HEK293T (cell line): ENCODE measurements at regions of chr20 and their contacts with region 1.

Region 1: GRCh38 chr20:23357767-23358591 is 4.0 kb upstream of the GZF1 start:
- DNase-seq: peak; percentile 85

Region 2: DNA sequence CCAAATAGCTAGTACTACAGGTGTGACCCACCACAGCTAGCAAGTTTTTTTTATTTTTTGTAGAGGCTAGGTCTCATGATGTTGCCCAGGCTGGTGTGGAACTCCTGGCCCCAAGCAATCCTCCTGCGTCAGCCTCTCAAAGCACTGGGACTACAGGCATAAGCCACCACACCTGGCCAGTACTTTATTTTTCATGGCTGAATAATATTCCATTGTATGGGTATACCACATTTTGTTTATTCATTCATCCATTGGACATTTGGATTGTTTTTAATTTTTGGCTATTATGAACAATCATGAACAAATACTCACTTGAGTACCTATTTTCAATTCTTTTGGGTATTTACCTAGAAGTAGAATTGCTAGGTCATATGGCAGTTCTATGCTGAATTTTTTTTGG is 14.4 kb before region 1 on chr20:
- CTCF ChIA-PET with region 1: no interaction called
- POLR2A ChIA-PET with region 1: no interaction called
- DNase-seq: no peak

Region 3: DNA sequence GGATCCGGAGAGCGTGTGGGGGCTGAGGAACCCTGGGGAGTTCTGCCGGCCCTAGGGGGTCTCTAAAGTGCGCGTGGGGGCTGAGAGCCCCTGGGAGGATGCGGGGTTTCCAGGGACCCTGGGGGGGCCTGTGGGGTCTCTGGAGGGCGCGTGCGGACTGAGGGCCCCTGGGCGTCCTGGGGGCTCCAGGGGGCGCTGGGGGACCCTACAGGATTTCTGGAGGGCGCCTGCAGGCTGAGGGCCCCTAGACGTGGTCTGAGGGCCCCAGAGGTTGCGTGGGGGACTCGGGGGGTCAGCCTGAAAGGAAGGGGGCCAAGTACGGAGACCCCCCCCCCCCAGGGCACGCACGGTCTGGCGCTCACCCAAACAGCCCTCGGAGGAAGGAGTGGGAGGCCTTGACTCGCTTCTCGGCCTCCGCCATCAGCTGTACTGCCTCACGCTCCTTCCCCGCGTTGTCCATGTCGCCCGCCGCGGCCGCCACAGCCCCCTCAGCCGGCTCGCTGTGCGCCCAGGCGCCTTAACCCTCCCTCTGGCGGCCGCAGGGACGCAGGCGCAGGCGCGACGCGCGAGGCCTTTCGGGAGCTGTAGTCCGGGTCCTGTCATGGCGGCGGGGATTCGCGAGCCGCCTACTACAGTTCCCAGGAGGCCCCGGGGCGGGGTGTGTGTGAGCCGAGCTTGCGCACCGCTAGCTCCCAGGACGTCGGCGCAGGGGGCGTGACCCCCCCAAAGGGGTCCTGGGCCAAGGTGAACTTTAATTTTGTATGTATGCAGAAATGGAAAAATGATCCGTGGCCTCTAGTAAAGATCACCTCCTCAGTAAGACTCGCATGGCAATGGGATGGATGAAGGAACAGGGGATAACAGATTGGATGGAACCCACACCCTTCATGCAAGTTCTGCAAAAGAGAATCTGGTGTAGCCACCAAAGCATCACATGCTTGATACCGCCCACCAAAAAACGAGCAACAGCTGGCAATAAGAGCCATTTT is 63.3 kb after region 1 on chr20 and contains the start of gene NAPB:
- CTCF ChIA-PET with region 1: no interaction called
- POLR2A ChIA-PET with region 1: interaction called, 10 read pairs
- DNase-seq: peak; percentile 93